Caki2 (cell line): ENCODE measurements at regions of chr20 and their contacts with region 1.

Region 1: DNA sequence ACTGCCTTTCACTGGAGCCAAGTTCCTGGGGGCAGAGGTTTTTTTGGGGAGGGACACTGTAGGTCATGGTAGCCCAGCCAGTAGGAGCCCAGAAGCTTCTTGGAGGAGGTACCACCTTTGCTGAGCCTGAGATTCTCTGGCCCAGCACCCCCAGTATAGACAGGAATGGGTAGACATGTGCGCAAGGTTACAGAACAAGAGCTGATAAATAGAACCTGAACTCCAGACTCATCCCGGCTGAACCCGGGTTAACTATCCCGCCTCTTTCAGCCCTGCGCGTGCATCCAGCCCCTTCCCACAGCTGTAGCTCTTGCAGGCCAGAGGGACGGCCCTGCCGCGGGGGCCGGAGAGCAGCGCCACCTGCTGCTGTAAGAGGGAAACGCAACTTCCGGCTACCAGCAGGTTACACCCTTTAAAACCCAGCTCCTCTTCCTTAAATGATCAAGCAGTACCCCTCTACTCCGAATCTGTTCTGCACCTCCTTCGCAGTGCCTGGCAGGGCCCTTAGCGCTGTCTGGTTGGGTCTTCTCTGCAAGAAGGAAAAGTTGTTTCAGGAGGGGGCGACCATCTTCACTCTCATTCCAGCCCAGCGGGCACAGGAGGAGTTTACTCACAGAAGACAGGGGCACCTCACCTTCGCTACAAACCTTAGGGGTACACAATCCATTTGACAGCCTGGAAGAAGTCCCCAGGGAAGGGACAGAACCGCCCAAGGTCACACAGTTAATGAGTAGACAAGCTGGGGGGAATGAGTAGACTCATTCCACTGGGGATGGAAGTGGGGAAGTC is 7.5 kb downstream of the SRXN1 start:
- DNase-seq: peak; percentile 75

Region 2: GRCh38 chr20:539848-540247 is 105.7 kb before region 1 on chr20:
- in situ Hi-C with region 1: loop called (anchors 10 kb)
- DNase-seq: peak; percentile 54

Region 3: DNA sequence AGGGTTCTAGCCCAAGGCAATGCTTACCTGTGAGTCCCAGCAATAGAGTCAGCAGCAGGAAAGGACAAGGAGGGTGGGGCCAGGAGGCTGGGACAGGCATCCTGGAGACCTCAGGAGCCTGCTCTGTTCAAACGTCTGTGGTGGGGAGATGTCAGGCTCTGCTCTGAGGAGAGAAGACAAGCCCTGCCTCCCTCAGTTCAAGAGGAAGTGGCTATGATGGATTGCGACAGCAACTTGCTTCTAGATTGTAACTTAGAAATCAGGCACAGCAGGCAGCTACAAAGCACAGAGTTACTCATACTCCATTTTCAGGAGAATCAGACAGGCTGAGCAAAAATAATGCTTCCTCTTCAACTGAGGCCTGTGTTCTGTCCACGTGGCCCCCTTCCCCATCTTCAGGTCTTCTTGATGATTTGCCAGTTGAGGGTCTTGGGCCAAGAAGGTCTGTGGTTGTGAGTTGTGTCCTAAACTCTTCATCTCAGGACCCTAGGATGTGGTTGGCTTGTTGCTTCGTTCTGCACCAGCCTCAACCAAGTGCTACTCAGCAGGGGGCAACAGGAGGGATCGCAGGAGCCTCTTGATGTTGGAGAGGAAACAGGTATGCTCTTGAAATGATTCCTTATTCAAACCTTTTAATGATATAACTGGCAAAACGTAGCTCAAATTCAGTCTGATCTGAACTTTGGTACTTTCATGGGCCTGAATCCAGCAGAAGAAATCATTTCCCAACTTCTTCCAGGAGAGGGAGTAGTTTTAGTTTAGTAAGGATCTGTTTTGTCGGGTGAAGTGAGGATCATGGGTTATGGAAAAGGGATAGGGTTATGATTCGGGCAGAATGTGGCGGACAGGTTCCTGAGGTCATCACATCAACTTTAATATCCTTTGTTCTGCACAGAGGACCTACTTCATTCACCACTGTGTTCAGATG is 943.3 kb after region 1 on chr20:
- in situ Hi-C with region 1: no loop called
- DNase-seq: no peak